ENCODE measurements at regions of chr6 and their contacts with region 1.

Region 1: DNA sequence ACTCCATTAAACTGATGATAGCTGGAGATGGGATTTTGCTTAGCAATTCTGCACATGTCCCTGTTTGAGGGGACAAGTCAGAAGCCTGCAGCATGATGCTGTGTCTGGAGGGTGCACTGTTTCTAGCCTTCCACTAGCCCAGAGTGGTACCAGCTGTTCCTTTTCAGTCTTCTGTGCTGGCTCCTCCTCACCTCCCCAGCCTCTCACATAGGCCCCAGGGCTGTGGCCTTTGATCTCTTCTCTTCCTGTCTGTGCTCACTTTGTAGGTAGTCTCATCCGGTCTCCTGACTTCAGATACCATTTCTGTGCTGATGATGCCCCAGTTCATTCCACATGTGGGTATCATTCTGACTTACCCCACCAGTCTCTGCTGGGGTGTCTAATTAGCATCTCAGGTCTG is 126.3 kb downstream of the HIVEP1 start:
- DNase-seq: peak; percentile 64
- H3K4me3 Mint-ChIP-seq: no peak overlapping the region
- H3K27ac Mint-ChIP-seq: peak overlapping the region; percentile 37
- H3K4me1 Mint-ChIP-seq: peaks cover 26% of the 10 kb centered on the region
- H3K27me3 Mint-ChIP-seq: no peaks in the 10 kb centered on the region

Region 2: GRCh38 chr6:12119085-12119588 is 19.2 kb before region 1 on chr6:
- CTCF ChIA-PET with region 1: no interaction called
- intact Hi-C with region 1: loop called (anchors 1 kb)
- DNase-seq: peak; percentile 73
- H3K4me3 Mint-ChIP-seq: peak overlapping the region; percentile 11
- H3K27ac Mint-ChIP-seq: peak overlapping the region; percentile 77
- H3K4me1 Mint-ChIP-seq: peaks cover 49% of the 10 kb centered on the region
- H3K27me3 Mint-ChIP-seq: no peaks in the 10 kb centered on the region

Region 3: DNA sequence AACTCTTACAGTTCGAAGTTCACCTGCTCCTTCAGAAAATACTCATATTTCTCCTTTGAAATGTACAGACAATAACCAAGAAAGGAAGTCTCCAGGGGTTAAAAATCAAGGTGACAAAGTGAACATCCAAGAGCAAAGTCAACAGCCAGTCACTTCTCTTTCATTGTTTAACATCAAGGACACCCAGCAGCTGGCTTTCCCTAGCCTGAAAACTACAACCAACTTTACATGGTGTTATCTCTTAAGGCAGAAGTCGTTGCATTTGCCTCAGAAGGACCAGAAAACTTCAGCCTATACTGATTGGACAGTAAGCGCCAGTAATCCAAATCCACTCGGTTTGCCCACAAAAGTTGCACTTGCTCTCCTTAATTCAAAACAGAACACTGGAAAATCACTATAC is 13.0 kb before region 1 on chr6:
- CTCF ChIA-PET with region 1: no interaction called
- intact Hi-C with region 1: loop called (anchors 2 kb)
- DNase-seq: no peak
- H3K4me3 Mint-ChIP-seq: no peak overlapping the region
- H3K27ac Mint-ChIP-seq: peak overlapping the region; percentile 15
- H3K4me1 Mint-ChIP-seq: peaks cover 48% of the 10 kb centered on the region
- H3K27me3 Mint-ChIP-seq: no peaks in the 10 kb centered on the region

Region 4: DNA sequence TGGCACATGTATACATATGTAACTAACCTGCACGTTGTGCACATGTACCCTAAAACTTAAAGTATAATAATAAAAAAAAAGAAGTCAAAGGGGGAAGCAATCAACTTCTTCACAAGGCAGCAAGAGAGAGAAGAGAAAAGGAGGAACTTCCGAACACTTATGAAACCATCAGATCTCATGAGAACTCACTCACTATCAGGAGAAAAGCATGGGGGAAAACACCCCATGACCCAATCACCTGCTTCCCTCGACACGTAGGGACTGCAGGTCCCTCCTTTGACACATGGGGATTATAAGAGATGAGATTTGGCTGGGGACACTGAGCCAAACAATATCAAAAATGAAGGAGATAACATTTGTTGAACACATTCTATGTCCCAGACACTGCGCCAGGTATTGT is 483.4 kb after region 1 on chr6:
- CTCF ChIA-PET with region 1: no interaction called
- intact Hi-C with region 1: no loop called
- DNase-seq: no peak
- H3K4me3 Mint-ChIP-seq: no peak overlapping the region
- H3K27ac Mint-ChIP-seq: no peak overlapping the region
- H3K4me1 Mint-ChIP-seq: no peaks in the 10 kb centered on the region
- H3K27me3 Mint-ChIP-seq: peaks cover 10% of the 10 kb centered on the region

Measured in activated naive CD4-positive, alpha-beta T cell treated with anti-CD3 and anti-CD28 coated beads for 36 hours (primary cell).